ENCODE measurements at regions of chr7 and their contacts with region 1.

Region 1: DNA sequence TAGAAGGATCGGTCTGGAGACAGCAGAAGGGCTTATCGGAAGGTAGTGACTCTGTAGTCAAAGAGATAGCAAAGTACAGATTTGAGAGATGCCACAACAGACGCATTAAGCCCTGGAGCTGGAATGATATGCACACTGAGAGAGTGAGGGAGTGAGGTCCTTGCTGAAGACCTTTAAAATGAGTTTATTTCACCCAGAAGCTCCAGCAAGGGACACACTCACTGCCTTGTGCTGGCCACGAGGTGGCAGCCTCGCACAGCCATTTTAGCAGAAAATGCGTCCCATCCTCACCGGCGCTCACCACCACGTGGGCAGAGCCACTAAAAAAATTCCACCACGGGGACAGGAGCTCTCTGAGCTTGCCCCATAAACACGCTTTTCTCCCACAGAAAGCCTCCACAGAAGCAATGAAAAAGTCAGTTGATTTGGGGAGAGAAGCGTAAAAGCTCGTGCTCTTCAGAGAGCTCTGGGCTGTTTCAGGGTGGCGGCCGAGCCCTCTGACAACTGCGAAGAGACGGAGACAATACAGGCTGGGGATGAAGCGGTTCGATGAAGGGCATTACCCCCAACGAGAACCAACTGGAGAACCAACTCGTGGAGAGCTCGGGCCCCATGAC is 163.0 kb upstream of the KLF14 start:
- DNase-seq: peak; percentile 81
- H3K4me3 ChIP-seq: no peak overlapping the region
- H3K27ac ChIP-seq: peak overlapping the region in 3 of 4 donors; percentile 15 to 65 (median 17)
- H3K4me1 ChIP-seq: peaks cover 0 to 79% (median 71%) of the 10 kb centered on the region in 4 donors
- H3K27me3 ChIP-seq: no peaks in the 10 kb centered on the region
- CTCF ChIP-seq: peak; percentile 64 to 82 (median 75)
- EP300 ChIP-seq: no peak
- POLR2A ChIP-seq: no peak

Region 2: GRCh38 chr7:131007394-131008330 is 110.7 kb after region 1 on chr7:
- intact Hi-C with region 1: loop called (anchors 2 kb)
- DNase-seq: peak; percentile 78
- H3K4me3 ChIP-seq: no peak overlapping the region
- H3K27ac ChIP-seq: peak overlapping the region; percentile 32 to 70 (median 69)
- H3K4me1 ChIP-seq: peaks cover 0 to 63% (median 57%) of the 10 kb centered on the region in 4 donors
- H3K27me3 ChIP-seq: no peaks in the 10 kb centered on the region
- CTCF ChIP-seq: peak in 3 of 4 experiments; percentile 44 to 68 (median 59)
- EP300 ChIP-seq: no peak
- POLR2A ChIP-seq: no peak

Region 3: DNA sequence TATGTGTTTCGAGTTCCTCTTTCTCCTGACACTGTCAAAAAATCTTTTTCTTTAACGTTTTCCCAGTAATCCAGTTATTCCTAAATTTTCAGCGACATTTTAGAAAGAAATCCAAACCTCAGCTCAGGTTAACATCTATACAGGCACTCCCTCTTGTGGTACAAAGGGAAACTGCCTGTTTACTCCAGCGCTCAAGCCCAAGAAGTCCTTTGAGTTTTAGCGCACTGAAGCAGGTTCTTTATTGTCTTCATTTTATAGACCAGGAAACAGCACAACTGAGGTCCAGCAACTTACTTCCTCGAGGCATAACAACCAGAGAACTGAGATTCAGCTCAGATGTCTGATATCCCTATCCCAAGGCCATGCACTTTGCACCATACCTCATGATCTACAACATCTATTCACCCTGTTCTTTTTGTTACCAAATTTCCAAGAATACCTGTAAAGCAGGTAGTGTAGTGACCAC is 143.5 kb after region 1 on chr7:
- intact Hi-C with region 1: loop called (anchors 2 kb)
- DNase-seq: no peak
- H3K4me3 ChIP-seq: no peak overlapping the region
- H3K27ac ChIP-seq: peak overlapping the region in 3 of 4 donors; percentile 37 to 46 (median 41)
- H3K4me1 ChIP-seq: peaks cover 0 to 38% (median 33%) of the 10 kb centered on the region in 4 donors
- H3K27me3 ChIP-seq: no peaks in the 10 kb centered on the region
- CTCF ChIP-seq: peak; percentile 69 to 87 (median 80)
- EP300 ChIP-seq: no peak
- POLR2A ChIP-seq: no peak

Region 4: DNA sequence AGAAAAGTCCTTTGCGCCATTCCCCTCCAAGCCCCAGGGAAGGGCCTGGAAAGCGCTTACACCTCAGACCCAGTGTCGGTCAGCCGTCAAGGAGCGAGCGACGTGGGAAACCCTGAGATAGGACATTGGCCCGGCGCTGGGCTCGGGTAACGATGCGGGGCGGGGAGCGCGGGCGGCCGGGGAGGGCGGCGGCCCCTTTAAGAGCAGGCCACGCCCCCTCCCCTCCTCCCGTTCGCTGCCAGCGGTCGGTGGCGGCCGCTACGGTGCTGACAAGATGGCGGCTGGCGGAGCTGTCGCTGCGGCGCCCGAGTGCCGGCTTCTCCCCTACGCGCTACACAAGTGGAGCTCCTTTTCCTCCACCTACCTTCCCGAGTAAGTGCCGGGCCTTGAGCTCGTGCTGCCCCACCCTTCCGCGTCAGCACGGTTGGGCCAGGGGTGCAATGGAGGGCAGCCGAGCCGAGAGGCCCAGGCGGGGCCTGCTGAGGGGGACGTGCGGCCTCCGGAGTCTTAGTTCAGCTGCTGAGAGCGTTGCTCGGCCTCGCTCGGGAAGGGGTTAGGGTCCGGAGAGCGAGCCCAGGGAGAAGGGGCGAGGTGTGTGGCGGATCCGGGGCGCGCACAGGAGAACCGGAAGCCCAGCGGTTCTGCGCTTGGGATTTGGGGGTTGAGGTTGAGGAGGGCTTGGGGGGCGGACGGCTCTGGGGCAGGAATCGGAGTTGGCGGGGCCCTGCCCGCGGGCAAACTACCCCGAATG is 430.8 kb after region 1 on chr7 and contains the start of gene MKLN1:
- intact Hi-C with region 1: loop called (anchors 10 kb)
- DNase-seq: peak; percentile 96
- H3K4me3 ChIP-seq: peak within 1 kb of the TSS; percentile 87 to 99 (median 94)
- H3K27ac ChIP-seq: peak within 1 kb of the TSS; percentile 97 to 100 (median 98)
- H3K4me1 ChIP-seq: peaks cover 0 to 35% (median 20%) of the 10 kb centered on the region in 4 donors
- H3K27me3 ChIP-seq: no peaks in the 10 kb centered on the region
- CTCF ChIP-seq: no peak
- EP300 ChIP-seq: peak in 2 of 4 donors; percentile 4 to 36
- POLR2A ChIP-seq: peak; percentile 54 to 70
- total RNA-seq, gene MKLN1: 48.2 to 68.1 (median 61.0) TPM

Region 5: DNA sequence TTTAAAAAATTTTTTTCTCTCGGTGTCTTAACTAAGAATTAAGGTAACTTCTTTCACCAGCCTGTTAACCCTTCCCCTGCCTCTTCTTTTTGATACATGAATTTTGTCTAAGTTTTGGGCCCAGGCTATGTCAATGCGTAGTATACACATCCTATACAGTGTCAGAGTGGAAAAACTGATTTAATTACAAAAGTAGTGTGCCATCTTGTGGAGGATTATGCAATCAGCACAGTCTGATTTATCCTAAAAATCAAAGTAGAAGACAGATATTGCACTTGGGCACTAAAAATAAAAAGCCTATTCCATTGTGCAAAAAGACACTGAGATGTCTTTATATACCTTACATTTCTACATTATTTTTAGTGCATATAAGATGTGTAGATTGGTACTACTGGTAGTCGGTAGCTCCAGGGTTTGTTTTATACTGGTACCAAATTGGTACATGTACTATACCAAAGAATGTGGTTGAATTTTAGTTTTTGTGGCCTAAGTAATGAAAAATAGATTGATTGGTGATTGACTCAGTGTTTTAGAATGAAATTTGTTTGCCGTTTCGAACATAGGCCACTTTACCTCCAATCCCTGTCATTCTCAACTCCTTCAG is 527.3 kb after region 1 on chr7:
- intact Hi-C with region 1: loop called (anchors 5 kb)
- DNase-seq: no peak
- H3K4me3 ChIP-seq: no peak overlapping the region
- H3K27ac ChIP-seq: peak overlapping the region; percentile 12 to 49 (median 14)
- H3K4me1 ChIP-seq: peaks cover 0 to 26% (median 15%) of the 10 kb centered on the region in 4 donors
- H3K27me3 ChIP-seq: no peaks in the 10 kb centered on the region
- CTCF ChIP-seq: peak in 3 of 4 experiments; percentile 30 to 60 (median 51)
- EP300 ChIP-seq: no peak
- POLR2A ChIP-seq: no peak

Region 6: DNA sequence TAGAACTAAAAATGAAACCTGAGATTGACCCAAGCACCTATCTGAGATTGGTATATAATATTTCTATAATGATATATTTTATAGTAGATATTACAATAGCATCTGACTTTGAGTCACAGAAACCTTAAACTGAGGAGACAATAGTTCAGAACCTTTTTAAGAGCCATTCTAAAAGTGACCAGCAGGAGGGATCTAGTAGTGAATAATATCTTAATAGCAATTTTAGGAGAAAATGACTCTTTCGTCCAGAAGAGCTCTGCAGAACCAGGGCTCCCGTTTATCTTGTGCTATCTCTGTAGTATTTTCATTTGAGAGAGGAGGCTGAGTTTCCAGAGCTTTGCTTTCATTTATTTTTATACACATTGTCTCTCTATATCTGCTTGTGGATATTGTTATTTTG is 591.4 kb after region 1 on chr7:
- intact Hi-C with region 1: no loop called
- DNase-seq: no peak
- H3K4me3 ChIP-seq: no peak overlapping the region
- H3K27ac ChIP-seq: no peak overlapping the region
- H3K4me1 ChIP-seq: peaks cover 0 to 3% (median 0%) of the 10 kb centered on the region in 4 donors
- H3K27me3 ChIP-seq: no peaks in the 10 kb centered on the region
- CTCF ChIP-seq: no peak
- EP300 ChIP-seq: no peak
- POLR2A ChIP-seq: no peak

Measured in sigmoid colon (tissue), 7 donors.